Activated naive CD4-positive, alpha-beta T cell treated with anti-CD3 and anti-CD28 coated beads for 36 hours (primary cell): ENCODE measurements at regions of chr17 and their contacts with region 1.

Region 1: DNA sequence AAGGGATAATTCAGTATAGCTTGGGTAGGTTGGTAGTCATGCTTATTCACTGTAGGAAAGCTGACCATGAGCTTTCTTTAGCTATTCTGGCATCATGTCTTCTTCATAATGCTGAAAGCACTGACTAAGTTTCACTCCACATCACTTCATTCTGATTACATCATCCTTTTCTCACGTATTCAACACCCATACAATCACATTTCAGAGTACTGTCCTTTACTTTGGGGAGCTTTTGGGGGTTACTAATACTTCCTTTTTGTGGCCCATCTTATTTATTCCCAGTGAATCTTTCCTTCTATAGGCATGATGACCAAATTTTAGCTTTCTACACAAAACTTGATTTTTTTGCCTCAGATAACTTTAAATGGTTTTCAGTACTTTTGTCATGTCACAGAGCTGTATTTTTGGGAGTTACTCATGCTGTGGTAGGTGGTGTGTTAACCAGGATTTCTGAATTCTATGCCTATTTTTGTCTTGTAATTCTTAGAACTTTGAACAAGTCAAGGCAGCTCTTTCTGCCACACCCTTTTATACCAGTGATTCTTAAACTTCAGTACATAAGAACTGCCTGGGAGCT is 23.5 kb downstream of the TADA2A start:
- DNase-seq: no peak
- H3K4me3 Mint-ChIP-seq: peak overlapping the region; percentile 1
- H3K27ac Mint-ChIP-seq: peak overlapping the region; percentile 89
- H3K4me1 Mint-ChIP-seq: peaks cover 23% of the 10 kb centered on the region
- H3K27me3 Mint-ChIP-seq: no peaks in the 10 kb centered on the region

Region 2: DNA sequence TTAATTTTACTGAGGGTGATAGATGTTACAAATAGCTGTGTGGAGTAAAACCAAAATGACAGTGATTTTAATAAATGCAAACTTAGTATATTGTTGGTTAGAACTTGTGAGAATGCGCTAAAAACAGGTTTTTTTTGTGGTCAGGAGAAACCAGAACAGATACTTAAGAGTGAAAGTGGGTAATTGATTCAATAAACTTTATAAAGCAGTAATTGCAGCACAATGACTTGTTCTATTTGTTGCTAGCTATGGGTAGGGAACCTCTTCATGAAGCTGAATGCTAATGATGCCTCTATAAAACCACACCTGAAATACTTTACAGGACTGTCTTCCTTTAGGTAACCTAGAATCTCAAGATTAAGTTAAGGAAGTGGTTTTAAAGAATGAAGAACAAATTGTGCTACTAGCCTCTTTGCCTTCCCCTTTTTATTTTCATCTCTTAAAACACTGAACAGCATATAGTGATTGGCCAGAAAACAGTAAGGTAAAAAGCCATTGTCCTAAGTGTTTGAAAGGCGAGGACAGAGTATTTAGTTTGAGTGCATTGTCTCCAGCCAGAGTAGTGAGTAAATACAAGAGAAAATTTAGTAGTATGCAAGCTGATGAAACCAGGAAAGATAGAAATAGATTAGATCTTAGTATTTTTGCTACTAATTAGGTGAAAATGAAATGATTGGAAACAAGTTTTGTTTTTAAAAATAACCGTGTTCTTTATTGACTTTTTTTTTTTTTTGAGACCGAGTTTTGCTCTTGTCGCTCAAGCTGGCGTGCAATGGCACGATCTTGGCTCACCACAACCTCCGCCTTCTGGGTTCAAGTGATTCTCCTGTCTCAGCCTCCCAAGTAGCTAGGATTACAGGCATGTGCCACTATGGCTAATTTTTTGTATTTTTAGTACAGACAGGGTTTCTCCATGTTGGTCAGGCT is 879.4 kb before region 1 on chr17:
- CTCF ChIA-PET with region 1: no interaction called
- intact Hi-C with region 1: loop called (anchors 5 kb)
- DNase-seq: no peak
- H3K4me3 Mint-ChIP-seq: peak overlapping the region; percentile 27
- H3K27ac Mint-ChIP-seq: peak overlapping the region; percentile 76
- H3K4me1 Mint-ChIP-seq: peaks cover 64% of the 10 kb centered on the region
- H3K27me3 Mint-ChIP-seq: no peaks in the 10 kb centered on the region

Region 3: DNA sequence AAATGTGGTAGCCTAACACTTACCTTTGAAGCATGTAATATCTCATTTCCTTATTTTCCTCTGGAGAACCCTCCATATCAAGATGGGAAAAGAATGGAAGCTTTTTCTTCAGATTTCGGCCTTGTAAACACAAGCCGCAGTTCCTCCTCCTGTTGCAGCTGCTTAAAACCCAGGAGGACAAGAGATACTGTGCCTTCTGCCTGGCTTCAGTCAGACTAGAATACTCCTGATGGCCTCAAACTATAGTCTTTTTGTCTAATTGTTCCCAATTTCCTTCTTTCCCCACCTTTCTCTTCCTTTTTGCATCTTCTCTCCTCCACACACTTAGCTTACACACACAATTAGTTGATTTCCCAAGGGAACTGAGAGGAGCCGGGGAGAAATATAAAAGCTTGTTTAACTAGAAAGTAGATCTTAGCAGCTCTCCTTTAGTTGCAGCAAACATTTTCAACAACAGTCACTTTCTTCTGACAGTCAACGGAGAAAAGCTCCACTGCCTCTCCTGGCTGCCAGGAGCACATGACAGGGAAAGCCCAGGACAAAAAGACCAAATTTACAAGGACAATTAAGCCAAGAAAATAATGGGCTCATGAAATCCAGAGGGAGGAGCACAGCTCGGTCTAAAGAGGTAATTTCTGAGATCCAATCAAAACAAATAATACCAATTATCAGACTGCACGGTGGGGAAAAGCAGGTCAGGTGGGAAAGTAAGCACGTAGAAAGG is 130.7 kb before region 1 on chr17:
- CTCF ChIA-PET with region 1: no interaction called
- intact Hi-C with region 1: no loop called
- DNase-seq: no peak
- H3K4me3 Mint-ChIP-seq: no peak overlapping the region
- H3K27ac Mint-ChIP-seq: no peak overlapping the region
- H3K4me1 Mint-ChIP-seq: peaks cover 2% of the 10 kb centered on the region
- H3K27me3 Mint-ChIP-seq: no peaks in the 10 kb centered on the region

Region 4: GRCh38 chr17:37489197-37490001 is 59.3 kb after region 1 on chr17 and contains the start of gene DUSP14:
- CTCF ChIA-PET with region 1: no interaction called
- intact Hi-C with region 1: loop called (anchors 1 kb)
- DNase-seq: peak; percentile 71
- H3K4me3 Mint-ChIP-seq: peak within 1 kb of the TSS; percentile 94
- H3K27ac Mint-ChIP-seq: peak within 1 kb of the TSS; percentile 76
- H3K4me1 Mint-ChIP-seq: peaks cover 48% of the 10 kb centered on the region
- H3K27me3 Mint-ChIP-seq: no peaks in the 10 kb centered on the region
- total RNA-seq, gene DUSP14: 7.0 to 7.9 TPM

Region 5: GRCh38 chr17:37671824-37672547 is 241.8 kb after region 1 on chr17:
- CTCF ChIA-PET with region 1: no interaction called
- intact Hi-C with region 1: no loop called
- DNase-seq: no peak
- H3K4me3 Mint-ChIP-seq: no peak overlapping the region
- H3K27ac Mint-ChIP-seq: no peak overlapping the region
- H3K4me1 Mint-ChIP-seq: no peaks in the 10 kb centered on the region
- H3K27me3 Mint-ChIP-seq: peaks cover 8% of the 10 kb centered on the region